ENCODE measurements at regions of chr16 and their contacts with region 1.

Region 1: GRCh38 chr16:89523680-89524344 is 15.6 kb downstream of the SPG7 start:
- DNase-seq: peak in 1 of 5 donors; percentile 33
- ATAC-seq: peak; percentile 32 to 85 (median 54)
- H3K4me3 ChIP-seq: peak overlapping the region in 10 of 12 donors; percentile 5 to 37 (median 26)
- H3K27ac ChIP-seq: peak overlapping the region in 11 of 12 donors; percentile 28 to 81 (median 65)
- H3K4me1 ChIP-seq: peaks cover 3 to 27% (median 15%) of the 10 kb centered on the region in 12 donors
- H3K27me3 ChIP-seq: no peaks in the 10 kb centered on the region
- CTCF ChIP-seq: peak in 2 of 12 donors; percentile 21 to 27
- POLR2A ChIP-seq: no peak

Region 2: GRCh38 chr16:89560378-89561141 is 36.7 kb after region 1 on chr16 and contains the start of gene RPL13:
- intact Hi-C with region 1: loop called in 1 of 10 experiments (anchors 5 kb)
- DNase-seq: peak; percentile 95 to 97 (median 96)
- ATAC-seq: peak; percentile 94 to 97 (median 96)
- H3K4me3 ChIP-seq: peak within 1 kb of the TSS; percentile 33 to 97 (median 84)
- H3K27ac ChIP-seq: peak within 1 kb of the TSS; percentile 88 to 99 (median 95)
- H3K4me1 ChIP-seq: peaks cover 8 to 64% (median 30%) of the 10 kb centered on the region in 12 donors
- H3K27me3 ChIP-seq: no peaks in the 10 kb centered on the region
- CTCF ChIP-seq: peak in 1 of 12 donors; percentile 6
- POLR2A ChIP-seq: peak; percentile 68 to 97
- total RNA-seq, gene RPL13: 701 to 3,315 (median 1,152) TPM